GM10248 (cell line): ENCODE measurements at regions of chr17 and their contacts with region 1.

Region 1: GRCh38 chr17:29116804-29117772 is 63.1 kb downstream of the MYO18A start:
- DNase-seq: peak; percentile 83
- CTCF ChIP-seq: peak; percentile 98

Region 2: DNA sequence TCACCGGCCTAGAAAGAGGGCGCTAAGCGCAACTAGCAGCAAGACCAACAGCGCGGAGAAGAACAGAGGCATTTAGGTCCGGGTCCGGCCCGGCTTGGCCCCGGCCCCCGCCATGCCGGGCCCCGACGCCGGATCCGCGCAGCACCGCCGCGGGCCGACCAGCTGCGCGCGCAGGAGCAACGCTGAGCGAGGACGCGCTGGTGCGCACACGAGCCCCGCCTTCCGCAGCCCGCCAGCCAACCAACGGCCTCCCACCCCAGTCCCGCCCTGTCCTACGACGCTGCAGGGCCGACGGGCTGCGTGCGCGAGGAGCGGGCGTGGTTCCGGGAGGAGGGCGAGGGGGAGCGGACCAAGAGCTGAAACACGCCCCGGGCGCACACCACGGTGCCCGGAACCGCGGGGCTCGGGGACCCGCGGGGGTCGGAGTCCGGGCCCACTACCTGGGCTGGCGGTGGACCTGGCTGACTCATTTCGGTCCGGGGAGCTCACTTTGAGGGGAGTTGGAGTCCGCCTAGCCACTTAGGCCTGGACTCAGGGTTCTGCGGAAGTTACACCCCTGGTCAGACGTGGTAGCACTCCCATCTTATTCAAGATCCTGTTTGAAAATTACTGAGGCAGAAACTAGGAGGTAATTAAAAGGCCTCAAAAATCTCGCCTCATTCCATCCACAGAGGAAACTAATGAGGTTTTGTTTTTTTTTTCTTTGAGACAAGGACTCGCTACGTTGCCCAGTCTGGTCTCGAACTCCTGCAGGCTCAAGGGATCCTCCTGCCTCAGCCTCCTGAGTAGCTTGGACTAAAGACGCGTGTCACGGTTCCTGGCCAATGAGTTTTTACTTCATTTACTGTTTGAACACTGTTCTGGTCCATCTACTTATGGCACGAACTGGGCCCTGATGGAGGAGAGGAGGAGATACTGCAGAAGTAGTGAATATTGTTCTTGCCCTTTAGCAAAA is 471.8 kb before region 1 on chr17 and contains the start of gene BLTP2:
- CTCF ChIA-PET with region 1: interaction called, 14 read pairs
- POLR2A ChIA-PET with region 1: no interaction called
- DNase-seq: peak; percentile 99
- CTCF ChIP-seq: no peak

Region 3: GRCh38 chr17:28967221-28968140 is 149.6 kb before region 1 on chr17:
- CTCF ChIA-PET with region 1: interaction called, 346 read pairs
- POLR2A ChIA-PET with region 1: no interaction called
- DNase-seq: no peak
- CTCF ChIP-seq: no peak

Region 4: GRCh38 chr17:29090750-29091603 is 26.1 kb before region 1 on chr17:
- CTCF ChIA-PET with region 1: interaction called, 21 read pairs
- POLR2A ChIA-PET with region 1: no interaction called
- DNase-seq: no peak
- CTCF ChIP-seq: no peak

Region 5: DNA sequence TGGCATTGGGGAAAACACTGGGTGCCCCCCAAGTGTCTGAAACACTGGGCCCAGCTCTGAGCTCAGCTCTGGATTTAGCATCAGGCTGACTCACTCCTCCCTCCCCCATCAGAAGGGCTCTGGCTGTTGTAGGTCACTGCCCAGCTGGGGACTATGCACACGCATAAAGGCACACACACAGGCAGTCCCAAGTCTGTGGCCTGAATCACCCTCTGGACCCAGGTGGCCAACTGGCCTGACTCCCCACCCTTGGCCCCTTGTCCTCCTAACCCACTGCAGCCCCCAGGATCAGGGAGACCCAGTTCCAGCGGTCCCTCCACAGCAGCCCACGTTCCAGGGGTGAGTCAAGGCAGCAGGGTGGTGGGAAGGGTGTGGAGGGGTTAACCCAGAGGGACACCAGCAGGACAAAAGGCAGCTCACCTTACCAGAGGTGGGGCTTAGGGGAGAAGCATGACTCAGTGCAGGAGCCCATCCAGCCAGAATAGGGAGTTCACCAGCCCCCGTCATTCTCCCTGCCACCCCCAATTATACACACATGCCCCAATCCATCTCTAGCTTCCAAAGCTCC is 16.1 kb after region 1 on chr17:
- CTCF ChIA-PET with region 1: interaction called, 89 read pairs
- POLR2A ChIA-PET with region 1: interaction called, 6 read pairs
- DNase-seq: no peak
- CTCF ChIP-seq: no peak

Region 6: DNA sequence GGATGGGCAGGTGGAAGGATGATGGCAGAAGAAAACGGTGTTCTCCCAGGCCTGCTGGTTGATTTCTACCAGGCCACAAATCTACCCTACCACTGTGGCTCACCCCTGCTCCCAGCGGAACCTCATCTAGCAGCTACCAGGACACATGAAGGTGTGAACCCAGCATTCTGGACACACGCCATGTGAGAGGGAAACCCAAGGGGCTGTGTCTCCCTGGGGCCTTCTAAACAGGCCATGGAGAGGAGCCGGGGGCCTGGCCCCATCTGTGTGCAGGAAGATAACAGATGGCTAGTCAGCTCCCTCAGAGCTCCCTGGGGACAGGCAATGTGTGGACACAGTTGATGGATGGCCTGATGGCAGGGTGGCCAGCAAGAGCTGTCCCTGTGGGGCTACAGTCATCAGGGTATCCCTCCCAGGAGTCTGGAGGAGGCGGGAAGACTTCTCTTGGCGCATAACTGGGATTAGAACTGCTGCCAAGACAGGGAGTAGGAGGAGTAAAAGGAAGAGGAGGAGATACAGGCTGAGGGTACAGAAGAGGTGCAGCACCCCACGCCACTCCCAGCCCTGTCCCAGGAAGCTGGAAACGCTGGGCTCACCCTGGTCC is 45.8 kb after region 1 on chr17:
- CTCF ChIA-PET with region 1: no interaction called
- POLR2A ChIA-PET with region 1: no interaction called
- DNase-seq: no peak
- CTCF ChIP-seq: no peak